Activated T-helper 1 cell treated with anti-CD3 and anti-CD28 coated beads, Interleukin-12 subunit alpha, Interleukin-12 subunit beta, Interleukin-2, Interleukin-4 antibody, amounts not matched to agents 30 ng/mL and 10 ng/mL and 1 ng/mL, durations not matched to agents 14 hours and 24 hours and 36 hours (primary cell): ENCODE measurements at regions of chr3 and their contacts with region 1.

Region 1: GRCh38 chr3:36911990-36912804 is 32.7 kb downstream of the TRANK1 start:
- DNase-seq: peak; percentile 40
- H3K4me3 Mint-ChIP-seq: peak overlapping the region; percentile 19
- H3K27ac Mint-ChIP-seq: peak overlapping the region; percentile 41
- H3K4me1 Mint-ChIP-seq: peaks cover 40% of the 10 kb centered on the region
- H3K27me3 Mint-ChIP-seq: no peaks in the 10 kb centered on the region

Region 2: DNA sequence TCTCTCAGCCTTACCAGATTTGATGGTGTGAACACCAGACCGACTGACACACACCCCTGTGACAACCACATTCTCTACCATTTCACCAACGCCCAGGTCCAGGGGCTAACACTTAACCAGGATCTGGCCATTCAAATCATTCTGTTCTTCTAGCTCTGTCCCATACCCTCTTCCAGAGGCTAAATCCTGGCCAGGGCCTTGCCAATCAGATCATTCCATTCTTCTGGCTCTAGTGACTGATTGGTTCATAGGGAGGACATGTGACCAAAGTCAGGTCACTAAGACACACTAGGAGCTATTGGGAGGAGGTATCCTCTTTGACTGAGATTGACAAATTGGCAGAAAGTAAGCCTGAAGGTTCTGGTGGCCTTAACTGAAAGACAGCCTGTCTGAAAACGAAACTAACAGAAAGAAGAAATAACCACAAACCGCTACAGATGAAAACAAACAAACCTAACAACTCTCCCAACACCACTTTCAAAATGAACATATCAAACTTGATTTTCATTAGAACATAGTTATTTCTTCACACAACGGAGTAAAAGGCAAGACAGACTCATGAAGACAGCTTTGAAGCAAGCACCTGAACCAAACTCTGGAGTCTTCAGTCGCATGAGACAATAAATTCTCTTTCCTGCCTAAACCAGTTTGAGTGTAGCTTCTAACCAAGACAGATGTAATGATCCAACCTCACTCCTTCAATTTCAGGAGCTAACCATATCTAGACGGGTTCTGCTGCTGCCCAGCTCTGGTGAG is 35.8 kb before region 1 on chr3:
- intact Hi-C with region 1: loop called (anchors 1 kb)
- DNase-seq: peak; percentile 20
- H3K4me3 Mint-ChIP-seq: peak overlapping the region; percentile 55
- H3K27ac Mint-ChIP-seq: peak overlapping the region; percentile 69
- H3K4me1 Mint-ChIP-seq: peaks cover 25% of the 10 kb centered on the region
- H3K27me3 Mint-ChIP-seq: peaks cover 18% of the 10 kb centered on the region

Region 3: GRCh38 chr3:36944012-36944640 is 31.9 kb after region 1 on chr3:
- intact Hi-C with region 1: loop called (anchors 1 kb)
- DNase-seq: no peak
- H3K4me3 Mint-ChIP-seq: peak overlapping the region; percentile 69
- H3K27ac Mint-ChIP-seq: no peak overlapping the region
- H3K4me1 Mint-ChIP-seq: no peaks in the 10 kb centered on the region
- H3K27me3 Mint-ChIP-seq: peaks cover 16% of the 10 kb centered on the region

Region 4: DNA sequence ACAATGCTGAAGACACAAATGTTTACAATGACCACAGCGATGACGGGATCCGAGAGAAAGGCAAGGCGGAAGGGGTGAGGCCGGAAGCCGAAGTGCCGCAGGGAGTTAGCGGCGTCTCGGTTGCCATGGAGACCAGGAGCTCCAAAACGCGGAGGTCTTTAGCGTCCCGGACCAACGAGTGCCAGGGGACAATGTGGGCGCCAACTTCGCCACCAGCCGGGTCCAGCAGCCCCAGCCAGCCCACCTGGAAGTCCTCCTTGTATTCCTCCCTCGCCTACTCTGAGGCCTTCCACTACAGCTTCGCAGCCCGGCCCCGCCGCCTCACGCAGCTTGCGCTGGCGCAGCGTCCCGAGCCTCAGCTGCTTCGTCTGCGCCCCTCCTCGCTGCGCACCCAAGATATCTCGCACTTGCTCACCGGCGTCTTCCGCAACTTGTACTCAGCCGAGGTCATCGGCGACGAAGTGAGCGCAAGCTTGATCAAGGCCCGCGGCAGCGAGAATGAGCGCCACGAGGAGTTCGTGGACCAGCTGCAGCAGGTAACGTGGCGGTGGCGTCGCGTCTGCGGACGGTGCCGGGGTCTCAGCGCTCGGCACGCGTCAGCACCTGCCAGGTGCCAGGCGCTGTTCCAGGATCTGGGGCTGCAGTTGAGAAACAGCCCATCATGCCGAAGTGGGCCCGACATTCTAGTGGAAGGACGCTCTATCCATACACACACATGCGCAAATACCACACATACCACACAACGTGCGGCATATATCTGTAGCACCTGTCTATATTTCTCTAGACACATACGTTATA is 1127.1 kb after region 1 on chr3 and contains the start of gene DLEC1:
- intact Hi-C with region 1: loop called (anchors 10 kb)
- DNase-seq: peak; percentile 84
- H3K4me3 Mint-ChIP-seq: peak within 1 kb of the TSS; percentile 75
- H3K27ac Mint-ChIP-seq: peak within 1 kb of the TSS; percentile 93
- H3K4me1 Mint-ChIP-seq: peaks cover 36% of the 10 kb centered on the region
- H3K27me3 Mint-ChIP-seq: peaks cover 7% of the 10 kb centered on the region
- total RNA-seq, gene DLEC1: 0.10 and 0.12 TPM in 2 replicates